Activated naive CD8-positive, alpha-beta T cell treated with anti-CD3 and anti-CD28 coated beads, Interleukin-2, amount 10 ng/mL, durations not matched to agents 7 days and 5 days (primary cell): ENCODE measurements at regions of chr16 and their contacts with region 1.

Region 1: DNA sequence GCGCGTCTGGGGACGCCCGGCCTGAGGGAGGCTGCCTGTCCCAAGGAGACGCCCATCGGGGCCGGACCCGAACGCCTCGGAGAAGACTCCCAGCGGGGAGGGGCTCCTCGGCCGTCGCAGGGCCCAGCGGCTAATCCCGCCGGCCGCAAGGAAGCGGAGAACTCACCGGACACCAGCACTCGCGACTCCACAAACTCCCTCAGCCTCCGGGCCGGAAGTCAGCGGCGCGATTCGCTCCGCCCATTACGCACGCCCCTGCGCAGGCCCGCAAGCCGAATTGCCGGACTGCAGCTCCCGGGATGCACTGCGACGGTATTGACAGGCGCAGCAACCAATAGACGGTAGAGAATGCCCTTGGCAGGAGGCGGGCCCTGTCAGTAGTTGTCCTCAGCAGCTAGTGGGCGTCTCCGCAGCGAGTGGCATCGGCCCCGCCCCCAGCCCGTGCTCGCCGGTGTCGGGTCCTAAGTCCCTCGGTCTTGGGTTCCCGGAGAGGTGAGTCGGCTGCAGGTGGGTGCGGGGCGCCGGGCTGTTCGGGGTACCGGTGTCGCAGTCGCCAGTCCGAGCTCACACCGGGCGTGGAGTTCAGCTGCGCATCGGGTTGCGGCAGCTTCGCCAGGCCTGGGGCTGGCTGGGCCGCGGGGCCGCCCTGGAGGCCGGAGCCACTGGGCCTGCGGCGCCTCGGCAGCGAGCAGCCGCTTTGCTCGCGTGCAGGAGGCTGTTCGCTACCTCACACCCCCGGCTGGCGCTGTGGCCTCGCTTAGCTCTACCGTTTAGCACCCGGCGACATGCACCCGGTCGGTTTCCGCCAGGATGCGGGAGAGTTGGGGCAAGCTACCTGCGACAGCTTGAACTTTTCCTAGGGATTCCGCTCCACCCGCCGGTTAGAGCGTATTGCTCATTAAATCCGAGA is at the starts of genes ZNF174 and ZSCAN32:
- DNase-seq: peak; percentile 96
- ATAC-seq: peak; percentile 97
- H3K4me3 Mint-ChIP-seq: peak within 1 kb of the TSS; percentile 93
- H3K27ac Mint-ChIP-seq: peak within 1 kb of the TSS; percentile 90
- H3K4me1 Mint-ChIP-seq: peaks cover 19% of the 10 kb centered on the region
- H3K27me3 Mint-ChIP-seq: no peaks in the 10 kb centered on the region
- total RNA-seq, gene ZNF174: 15.5 to 16.0 TPM
- total RNA-seq, gene ZSCAN32: 20.5 to 22.5 TPM

Region 2: DNA sequence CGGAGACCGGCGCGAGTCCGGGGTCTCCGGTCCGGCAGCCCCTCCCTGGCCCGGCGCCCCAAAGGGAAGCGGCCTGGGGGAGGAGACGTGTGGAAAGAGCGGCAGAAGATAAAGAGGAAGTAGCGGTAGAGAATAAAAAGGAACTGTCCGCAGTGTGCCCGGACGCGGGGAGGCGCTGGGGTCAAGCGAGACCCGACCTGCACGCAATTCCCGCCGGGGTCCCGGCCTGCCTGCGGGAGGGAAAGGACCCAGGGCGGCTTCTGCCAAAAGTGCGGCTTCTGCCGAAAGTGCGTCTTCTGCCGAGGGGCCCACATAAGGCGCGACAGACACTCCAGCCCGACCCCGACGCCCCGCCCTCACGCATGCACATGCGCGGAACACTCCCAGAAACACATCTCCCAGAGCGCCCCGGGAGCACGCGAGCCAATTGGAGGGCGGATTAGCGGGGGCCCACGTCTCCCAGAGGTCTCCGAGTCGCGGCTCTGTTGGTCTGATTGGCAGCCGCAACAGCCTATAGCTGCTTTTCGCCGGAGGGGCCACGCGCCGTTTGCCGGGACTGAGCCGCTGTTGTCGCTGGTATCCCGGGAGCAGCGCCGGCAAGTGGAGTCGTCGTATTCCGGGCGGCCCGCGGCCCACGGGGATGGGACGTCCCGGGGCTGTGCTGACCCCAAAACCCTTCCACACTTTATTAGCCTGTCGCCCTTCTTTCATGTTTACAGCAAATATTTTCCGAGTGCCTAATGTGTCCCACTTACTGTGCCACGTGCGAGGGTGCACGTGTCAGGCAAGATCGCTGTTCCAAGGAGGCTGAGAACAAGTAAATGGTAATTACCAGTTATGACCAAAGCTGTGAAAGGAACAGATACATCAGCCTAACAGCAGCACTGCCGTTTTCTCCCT is 136.6 kb before region 1 on chr16:
- POLR2A ChIA-PET with region 1: interaction called, 19 read pairs
- DNase-seq: peak; percentile 96
- ATAC-seq: peak; percentile 90
- H3K4me3 Mint-ChIP-seq: peak overlapping the region; percentile 94
- H3K27ac Mint-ChIP-seq: peak overlapping the region; percentile 96
- H3K4me1 Mint-ChIP-seq: peaks cover 22% of the 10 kb centered on the region
- H3K27me3 Mint-ChIP-seq: no peaks in the 10 kb centered on the region

Region 3: DNA sequence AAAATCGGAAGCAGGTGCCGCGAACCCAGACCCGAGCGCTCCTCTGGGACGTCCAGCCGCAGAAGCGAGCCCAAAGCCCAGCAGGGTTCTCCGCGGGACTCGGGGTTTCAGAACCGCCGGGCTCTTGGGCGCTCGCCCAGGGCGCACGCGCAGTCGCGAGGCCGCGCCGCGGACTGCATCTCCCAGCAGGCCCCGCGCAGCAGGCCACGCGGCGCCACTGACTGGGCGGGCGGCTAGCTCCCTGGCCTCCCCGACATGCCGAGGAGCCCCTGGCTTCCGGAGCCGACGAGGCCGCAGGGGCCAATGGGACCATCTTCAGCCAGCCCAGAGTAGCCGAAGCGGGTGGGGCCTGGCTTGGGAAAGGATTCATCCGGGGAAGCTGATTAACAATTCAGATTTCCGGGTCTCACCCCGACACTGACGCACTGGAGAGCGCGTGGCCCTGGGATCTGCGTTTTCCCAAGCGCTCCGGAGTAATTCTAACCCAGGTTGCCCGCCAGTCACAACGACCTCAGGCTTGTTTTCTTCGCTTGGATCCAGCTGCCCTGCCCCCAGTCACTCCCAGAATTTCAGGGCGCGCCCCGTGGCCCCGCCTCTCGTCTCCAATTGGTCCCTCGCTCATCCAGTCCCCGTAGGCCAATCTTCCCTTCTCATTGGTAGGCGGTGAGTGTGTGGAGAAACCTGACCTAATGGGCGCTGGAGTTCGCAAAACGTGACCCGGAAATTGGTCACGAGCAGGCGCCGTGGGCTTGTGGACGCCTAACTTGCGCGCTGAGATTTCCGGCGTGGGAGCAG is 118.1 kb before region 1 on chr16 and contains the start of gene ZNF263:
- POLR2A ChIA-PET with region 1: interaction called, 42 read pairs
- DNase-seq: peak; percentile 96
- ATAC-seq: peak; percentile 88
- H3K4me3 Mint-ChIP-seq: peak within 1 kb of the TSS; percentile 95
- H3K27ac Mint-ChIP-seq: peak within 1 kb of the TSS; percentile 89
- H3K4me1 Mint-ChIP-seq: peaks cover 23% of the 10 kb centered on the region
- H3K27me3 Mint-ChIP-seq: peaks cover 3% of the 10 kb centered on the region
- total RNA-seq, gene ZNF263: 34.7 to 36.7 TPM

Region 4: GRCh38 chr16:3305109-3306068 is 95.6 kb before region 1 on chr16 and contains the starts of genes TIGD7 and ZNF75A:
- POLR2A ChIA-PET with region 1: interaction called, 17 read pairs
- DNase-seq: peak; percentile 90
- ATAC-seq: peak; percentile 95
- H3K4me3 Mint-ChIP-seq: peak within 1 kb of the TSS; percentile 81
- H3K27ac Mint-ChIP-seq: peak within 1 kb of the TSS; percentile 88
- H3K4me1 Mint-ChIP-seq: peaks cover 16% of the 10 kb centered on the region
- H3K27me3 Mint-ChIP-seq: no peaks in the 10 kb centered on the region
- total RNA-seq, gene TIGD7: 10.3 to 12.1 TPM
- total RNA-seq, gene ZNF75A: 63.6 to 63.8 TPM

Region 5: DNA sequence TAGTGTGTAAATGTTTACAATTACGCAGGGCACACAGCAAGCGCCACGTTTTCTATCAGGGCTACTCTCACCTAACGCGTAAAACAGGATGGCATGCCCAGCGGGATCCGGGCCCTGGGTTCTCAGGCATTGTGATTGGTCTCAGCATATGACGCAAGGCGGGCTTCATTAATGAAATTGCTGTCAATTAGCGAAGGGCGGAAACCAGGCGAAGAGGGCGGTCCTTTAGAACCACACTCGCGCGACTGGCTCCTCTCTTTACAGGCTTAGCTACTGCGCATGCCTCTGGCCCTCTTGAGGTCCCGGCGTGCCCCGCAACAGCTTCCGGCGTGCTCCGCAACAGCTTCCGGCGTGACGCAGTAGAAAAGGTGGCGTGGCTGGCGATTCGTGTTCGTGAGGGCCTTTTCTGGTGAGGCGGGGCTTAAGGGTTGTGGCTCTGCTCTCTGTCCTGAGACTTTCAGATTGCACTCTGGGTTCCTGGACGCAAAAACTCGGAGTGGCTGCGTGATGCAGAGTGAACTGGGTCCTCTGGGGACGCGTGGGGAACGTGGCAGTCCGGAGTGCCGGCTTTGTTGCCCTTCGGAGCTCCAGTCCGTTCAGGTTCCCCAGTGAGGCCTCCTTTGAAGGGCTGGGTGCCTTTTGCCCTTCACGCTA is 36.1 kb before region 1 on chr16:
- POLR2A ChIA-PET with region 1: interaction called, 12 read pairs
- DNase-seq: peak; percentile 87
- ATAC-seq: peak; percentile 97
- H3K4me3 Mint-ChIP-seq: peak overlapping the region; percentile 82
- H3K27ac Mint-ChIP-seq: peak overlapping the region; percentile 89
- H3K4me1 Mint-ChIP-seq: peaks cover 9% of the 10 kb centered on the region
- H3K27me3 Mint-ChIP-seq: peaks cover 4% of the 10 kb centered on the region

Region 6: DNA sequence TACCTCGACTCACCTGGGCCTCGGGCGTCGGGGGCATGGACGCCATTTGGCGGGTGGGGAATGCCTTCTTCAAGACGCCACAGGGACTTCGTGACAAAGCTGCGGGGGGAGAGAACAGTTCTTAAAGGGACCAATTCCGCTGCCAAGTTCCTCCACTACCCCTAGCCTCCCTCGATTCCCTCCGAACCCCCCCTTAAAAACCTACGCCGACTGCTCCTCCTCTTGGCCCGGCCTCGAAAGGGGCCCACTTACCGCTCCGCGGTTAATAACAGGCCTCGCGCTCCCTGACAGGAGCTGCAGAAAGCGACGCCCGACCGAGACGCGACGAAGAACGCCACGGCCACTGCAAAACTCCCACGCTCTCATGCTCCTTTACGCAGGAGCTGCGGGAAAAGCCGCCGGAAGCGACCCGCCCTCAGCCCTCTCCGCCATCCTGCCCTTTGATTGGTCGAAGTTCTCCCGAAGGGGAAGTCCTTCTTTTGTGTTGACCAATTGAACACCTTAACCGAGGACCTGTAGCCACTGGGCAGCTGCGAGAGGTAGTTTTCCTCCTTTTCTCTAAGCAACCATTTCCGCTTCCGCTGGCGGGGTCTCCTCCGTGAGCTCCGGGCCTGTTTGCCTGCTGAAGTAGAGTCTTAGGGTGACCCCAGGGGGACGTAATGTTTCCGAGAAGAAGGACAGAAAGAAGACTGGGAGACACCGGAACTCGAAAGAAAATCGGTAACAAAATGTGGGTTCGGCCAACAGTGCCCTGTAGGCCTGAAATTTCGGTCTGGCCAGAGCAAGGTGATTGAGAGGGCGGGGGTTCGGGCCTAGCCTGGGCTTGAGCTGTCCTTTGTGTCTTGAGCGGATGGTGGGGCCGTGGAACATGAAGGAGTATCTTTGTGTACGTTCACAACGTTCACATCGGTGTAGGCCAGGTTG is 42.3 kb after region 1 on chr16 and contains the starts of genes NAA60 and ZNF597:
- POLR2A ChIA-PET with region 1: interaction called, 23 read pairs
- DNase-seq: peak; percentile 65
- ATAC-seq: peak; percentile 91
- H3K4me3 Mint-ChIP-seq: peak within 1 kb of the TSS; percentile 94
- H3K27ac Mint-ChIP-seq: peak within 1 kb of the TSS; percentile 89
- H3K4me1 Mint-ChIP-seq: peaks cover 16% of the 10 kb centered on the region
- H3K27me3 Mint-ChIP-seq: no peaks in the 10 kb centered on the region
- total RNA-seq, gene NAA60: 54.0 to 54.6 TPM
- total RNA-seq, gene ZNF597: 3.6 to 4.2 TPM

Region 7: GRCh38 chr16:3457434-3458252 is 56.6 kb after region 1 on chr16:
- POLR2A ChIA-PET with region 1: interaction called, 14 read pairs
- DNase-seq: peak; percentile 98
- ATAC-seq: peak; percentile 88
- H3K4me3 Mint-ChIP-seq: peak overlapping the region; percentile 84
- H3K27ac Mint-ChIP-seq: peak overlapping the region; percentile 87
- H3K4me1 Mint-ChIP-seq: peaks cover 39% of the 10 kb centered on the region
- H3K27me3 Mint-ChIP-seq: no peaks in the 10 kb centered on the region